Heart left ventricle (tissue), 16 donors: ENCODE measurements at regions of chr18 and their contacts with region 1.

Region 1: DNA sequence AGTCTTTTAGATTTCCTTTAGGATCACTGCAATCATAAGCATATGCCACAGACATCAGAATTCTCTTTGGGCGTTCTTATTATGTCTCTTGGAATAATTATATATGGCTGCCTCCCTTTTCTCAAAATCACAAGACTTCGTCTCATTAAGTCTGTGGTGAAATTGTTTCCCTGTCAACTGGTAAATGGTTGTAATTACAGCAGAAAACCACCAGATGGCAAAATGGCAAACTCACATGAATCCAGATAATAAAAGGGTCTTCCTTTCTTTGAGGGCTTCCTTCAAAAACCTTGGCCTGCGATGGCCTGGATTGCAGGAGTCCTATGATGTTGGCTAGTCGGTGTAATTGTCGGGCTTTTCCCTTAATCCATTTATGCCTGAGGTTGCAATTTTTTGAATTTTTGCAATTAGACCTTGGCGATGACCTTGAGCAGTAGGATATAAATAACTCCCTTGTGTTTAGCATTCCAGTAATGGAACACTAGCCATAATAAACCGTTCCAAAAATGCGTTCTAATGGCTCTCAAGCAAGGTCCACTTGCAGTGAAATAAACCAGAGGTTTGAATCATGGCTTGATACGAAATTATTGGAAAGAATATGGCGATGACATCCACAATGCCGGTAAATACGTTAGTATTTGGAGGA is 656.4 kb downstream of the MBD2 start:
- DNase-seq: no peak
- ATAC-seq: peak; percentile 45 to 75 (median 66)
- H3K4me3 ChIP-seq: no peak overlapping the region
- H3K27ac ChIP-seq: peak overlapping the region in 3 of 12 donors; percentile 9 to 22 (median 12)
- H3K4me1 ChIP-seq: peaks cover 0 to 5% (median 0%) of the 10 kb centered on the region in 12 donors
- H3K27me3 ChIP-seq: no peaks in the 10 kb centered on the region
- CTCF ChIP-seq: peak; percentile 36 to 69 (median 60)
- POLR2A ChIP-seq: no peak

Region 2: GRCh38 chr18:53796040-53796729 is 228.1 kb after region 1 on chr18:
- intact Hi-C with region 1: no loop called
- DNase-seq: peak in 1 of 5 donors; percentile 26
- ATAC-seq: peak; percentile 70 to 93 (median 78)
- H3K4me3 ChIP-seq: no peak overlapping the region
- H3K27ac ChIP-seq: no peak overlapping the region
- H3K4me1 ChIP-seq: peaks cover 0 to 6% (median 0%) of the 10 kb centered on the region in 12 donors
- H3K27me3 ChIP-seq: no peaks in the 10 kb centered on the region
- CTCF ChIP-seq: no peak
- POLR2A ChIP-seq: no peak

Region 3: DNA sequence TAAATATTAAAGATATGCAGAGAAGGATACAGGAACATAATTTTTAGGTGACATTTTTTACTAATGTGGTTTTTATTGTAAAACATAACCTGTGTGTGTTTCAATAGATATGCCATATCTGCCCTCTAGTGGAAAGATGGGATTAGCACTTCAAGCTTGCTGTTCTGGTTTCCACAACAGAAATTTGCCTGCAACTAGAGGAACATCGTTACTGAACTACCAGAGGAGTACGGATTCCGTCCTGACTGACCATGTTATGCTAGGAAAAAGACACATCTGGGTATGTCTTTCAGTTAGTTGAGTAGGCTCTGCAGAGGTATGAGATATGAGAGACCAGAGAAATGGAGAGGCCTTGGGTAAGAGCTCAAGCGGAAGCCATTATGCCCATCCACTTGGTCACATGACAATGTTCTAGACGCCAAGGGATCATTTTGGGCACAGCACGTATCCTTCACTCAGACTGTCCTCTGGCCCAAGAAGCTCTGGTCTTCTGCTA is 551.5 kb after region 1 on chr18:
- intact Hi-C with region 1: loop called in 9 of 10 experiments (anchors 2 to 10 kb)
- DNase-seq: no peak
- ATAC-seq: peak; percentile 37 to 81 (median 62)
- H3K4me3 ChIP-seq: peak overlapping the region in 4 of 12 donors; percentile 4 to 33 (median 22)
- H3K27ac ChIP-seq: no peak overlapping the region
- H3K4me1 ChIP-seq: peaks cover 0 to 4% (median 0%) of the 10 kb centered on the region in 12 donors
- H3K27me3 ChIP-seq: no peaks in the 10 kb centered on the region
- CTCF ChIP-seq: peak; percentile 50 to 86 (median 74)
- POLR2A ChIP-seq: no peak

Region 4: DNA sequence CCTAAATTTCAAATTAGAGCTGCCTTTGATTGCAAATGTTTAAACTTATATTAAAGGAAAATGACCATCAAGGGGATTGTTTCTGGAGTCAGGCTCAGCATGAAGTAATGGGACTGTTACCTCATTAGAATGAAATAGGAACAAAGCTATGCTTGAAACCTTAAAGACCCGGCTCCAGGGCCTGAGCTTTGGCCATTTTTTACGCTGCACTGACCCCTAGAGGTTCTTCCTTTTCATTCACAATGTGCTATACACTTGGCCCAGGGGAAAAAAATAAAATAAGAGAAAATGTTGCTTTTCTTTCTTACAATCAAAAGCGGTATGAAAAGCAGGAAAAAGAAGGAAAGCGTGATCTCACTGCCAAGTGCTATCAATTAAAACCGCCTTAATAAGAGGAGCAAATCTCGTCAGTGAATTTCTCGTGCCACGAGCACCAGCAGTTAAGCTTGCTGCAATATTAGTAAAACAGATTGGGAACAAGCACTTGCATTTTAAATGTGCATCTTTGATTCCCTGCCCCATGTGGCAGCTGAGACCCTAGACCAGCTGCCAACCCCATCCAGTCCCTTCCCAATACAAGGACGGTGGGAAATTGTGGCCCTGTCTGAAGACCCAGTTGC is 559.8 kb after region 1 on chr18:
- intact Hi-C with region 1: loop called in 3 of 10 experiments (anchors 5 to 10 kb)
- DNase-seq: peak in 2 of 5 donors; percentile 11 to 21
- ATAC-seq: peak in 3 of 4 donors; percentile 60 to 76 (median 72)
- H3K4me3 ChIP-seq: no peak overlapping the region
- H3K27ac ChIP-seq: no peak overlapping the region
- H3K4me1 ChIP-seq: peaks cover 0 to 6% (median 0%) of the 10 kb centered on the region in 12 donors
- H3K27me3 ChIP-seq: no peaks in the 10 kb centered on the region
- CTCF ChIP-seq: peak; percentile 26 to 59 (median 45)
- POLR2A ChIP-seq: no peak